GM12878 (cell line): ENCODE measurements at regions of chr3 and their contacts with region 1.

Region 1: DNA sequence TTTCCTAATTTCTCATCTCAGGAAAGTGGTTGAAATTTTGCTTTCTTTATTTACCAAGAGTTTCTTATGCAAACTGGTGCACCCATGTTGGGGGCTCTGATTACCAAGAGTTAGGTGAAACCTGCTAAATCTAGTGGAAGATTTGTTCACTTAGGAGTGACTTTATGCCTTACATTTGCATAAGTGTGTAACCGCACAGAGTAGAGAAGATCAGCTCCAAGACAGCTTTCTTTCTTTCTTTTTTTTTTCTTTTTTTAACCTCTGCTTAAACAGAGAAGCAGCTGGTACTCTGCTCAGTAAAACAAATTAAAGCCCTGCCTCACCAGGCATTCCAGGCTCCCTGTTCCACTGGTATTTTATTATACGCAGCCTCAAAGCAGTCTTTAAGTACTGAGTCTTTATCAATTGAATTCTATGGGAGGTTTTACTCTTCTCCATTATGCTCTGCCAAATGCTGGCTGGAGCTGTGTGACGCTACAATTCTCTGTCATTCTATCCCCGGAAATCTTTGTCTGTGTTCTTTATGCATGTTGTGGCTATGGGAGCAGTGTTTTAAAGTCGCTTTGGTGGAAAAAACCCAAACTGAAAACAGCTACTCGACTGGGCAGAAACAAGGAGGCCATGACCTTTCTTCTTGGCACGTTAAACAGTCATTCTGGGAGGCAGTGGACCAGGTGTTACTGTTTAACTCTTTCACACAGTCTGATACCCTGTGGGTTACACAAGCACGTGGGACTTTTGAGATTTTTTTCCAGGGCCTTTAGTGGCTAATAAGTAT is 55.2 kb upstream of the GBE1 start:
- DNase-seq: peak; percentile 90
- ATAC-seq: peak; percentile 98
- H3K4me3 ChIP-seq: 0 out of 2 replicates have a peak overlapping the region, but pooled peaks have one; percentile 27
- H3K27ac ChIP-seq: peak overlapping the region; percentile 90
- H3K4me1 ChIP-seq: peaks cover 14% of the 10 kb centered on the region
- H3K27me3 ChIP-seq: no peaks in the 10 kb centered on the region
- CTCF ChIP-seq: no peak
- EP300 ChIP-seq: peak; percentile 91 to 94
- POLR2A ChIP-seq: no peak
- RAD21 ChIP-seq: peak; percentile 37; the same call in 1 of the 2 replicates

Region 2: GRCh38 chr3:81778678-81779182 is 37.9 kb before region 1 on chr3:
- CTCF ChIA-PET with region 1: interaction called, 3 read pairs
- POLR2A ChIA-PET with region 1: interaction called, 6 read pairs
- RAD21 ChIA-PET with region 1: interaction called, 10 read pairs
- SMC1A ChIA-PET with region 1: interaction called, 3 read pairs
- in situ Hi-C with region 1: no loop called
- intact Hi-C with region 1: loop called (anchors 5 kb)
- DNase-seq: peak; percentile 39
- ATAC-seq: peak; percentile 73
- H3K4me3 ChIP-seq: no peak overlapping the region
- H3K27ac ChIP-seq: peak overlapping the region; percentile 35; the same call in 1 of the 2 replicates
- H3K4me1 ChIP-seq: no peaks in the 10 kb centered on the region
- H3K27me3 ChIP-seq: no peaks in the 10 kb centered on the region
- CTCF ChIP-seq: no peak
- EP300 ChIP-seq: no peak
- POLR2A ChIP-seq: no peak
- RAD21 ChIP-seq: no peak

Region 3: DNA sequence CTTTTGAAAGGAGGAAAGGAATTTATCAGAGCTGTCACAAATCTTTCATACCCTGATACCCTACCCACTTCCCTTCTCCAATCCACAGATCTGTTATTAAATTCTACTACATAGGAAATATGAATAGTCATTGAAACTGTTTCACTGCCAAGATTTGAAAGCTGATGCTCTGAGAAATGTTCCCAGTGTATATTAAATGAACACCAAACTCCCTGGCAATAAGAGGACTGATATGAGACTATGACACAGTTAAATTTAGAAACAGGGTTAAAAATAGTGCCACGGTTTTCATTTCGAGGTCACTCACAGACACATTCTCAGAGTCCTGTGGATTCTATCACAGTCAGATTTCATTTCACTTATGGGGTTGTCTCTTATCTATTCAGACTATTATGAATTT is 28.1 kb before region 1 on chr3:
- CTCF ChIA-PET with region 1: no interaction called
- POLR2A ChIA-PET with region 1: interaction called, 4 read pairs
- RAD21 ChIA-PET with region 1: interaction called, 4 read pairs
- SMC1A ChIA-PET with region 1: interaction called, 10 read pairs
- in situ Hi-C with region 1: no loop called
- intact Hi-C with region 1: loop called (anchors 2 kb)
- DNase-seq: peak; percentile 58
- ATAC-seq: peak; percentile 88
- H3K4me3 ChIP-seq: no peak overlapping the region
- H3K27ac ChIP-seq: peak overlapping the region; percentile 69
- H3K4me1 ChIP-seq: peaks cover 16% of the 10 kb centered on the region
- H3K27me3 ChIP-seq: no peaks in the 10 kb centered on the region
- CTCF ChIP-seq: no peak
- EP300 ChIP-seq: peak in 1 of 2 experiments; percentile 31; a peak in 1 of 4 replicates
- POLR2A ChIP-seq: no peak
- RAD21 ChIP-seq: no peak

Region 4: DNA sequence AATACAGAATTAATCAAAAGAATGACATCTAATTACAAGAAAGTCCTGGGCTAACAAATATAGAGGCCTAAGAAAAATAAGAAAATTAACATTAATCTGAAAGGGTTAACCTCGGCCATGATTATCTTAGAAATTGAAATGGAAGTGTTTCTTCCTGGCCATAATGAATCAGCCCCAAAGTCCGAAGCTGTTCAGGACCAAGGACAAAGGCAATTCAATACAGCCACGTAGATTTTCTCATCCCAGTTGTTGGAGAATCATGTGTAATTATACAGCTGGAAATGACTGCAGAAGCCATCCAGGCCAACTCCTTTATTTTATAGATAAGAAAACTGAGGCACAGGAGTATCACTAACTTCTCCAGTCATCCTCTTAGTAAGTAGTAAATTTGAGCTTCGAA is 17.3 kb before region 1 on chr3:
- CTCF ChIA-PET with region 1: interaction called, 4 read pairs
- POLR2A ChIA-PET with region 1: no interaction called
- RAD21 ChIA-PET with region 1: no interaction called
- SMC1A ChIA-PET with region 1: interaction called, 15 read pairs
- in situ Hi-C with region 1: no loop called
- intact Hi-C with region 1: no loop called
- DNase-seq: no peak
- ATAC-seq: no peak
- H3K4me3 ChIP-seq: no peak overlapping the region
- H3K27ac ChIP-seq: no peak overlapping the region
- H3K4me1 ChIP-seq: no peaks in the 10 kb centered on the region
- H3K27me3 ChIP-seq: no peaks in the 10 kb centered on the region
- CTCF ChIP-seq: no peak
- EP300 ChIP-seq: no peak
- POLR2A ChIP-seq: no peak
- RAD21 ChIP-seq: no peak